CD14-positive monocyte (primary cell): ENCODE measurements at regions of chr3 and their contacts with region 1.

Region 1: DNA sequence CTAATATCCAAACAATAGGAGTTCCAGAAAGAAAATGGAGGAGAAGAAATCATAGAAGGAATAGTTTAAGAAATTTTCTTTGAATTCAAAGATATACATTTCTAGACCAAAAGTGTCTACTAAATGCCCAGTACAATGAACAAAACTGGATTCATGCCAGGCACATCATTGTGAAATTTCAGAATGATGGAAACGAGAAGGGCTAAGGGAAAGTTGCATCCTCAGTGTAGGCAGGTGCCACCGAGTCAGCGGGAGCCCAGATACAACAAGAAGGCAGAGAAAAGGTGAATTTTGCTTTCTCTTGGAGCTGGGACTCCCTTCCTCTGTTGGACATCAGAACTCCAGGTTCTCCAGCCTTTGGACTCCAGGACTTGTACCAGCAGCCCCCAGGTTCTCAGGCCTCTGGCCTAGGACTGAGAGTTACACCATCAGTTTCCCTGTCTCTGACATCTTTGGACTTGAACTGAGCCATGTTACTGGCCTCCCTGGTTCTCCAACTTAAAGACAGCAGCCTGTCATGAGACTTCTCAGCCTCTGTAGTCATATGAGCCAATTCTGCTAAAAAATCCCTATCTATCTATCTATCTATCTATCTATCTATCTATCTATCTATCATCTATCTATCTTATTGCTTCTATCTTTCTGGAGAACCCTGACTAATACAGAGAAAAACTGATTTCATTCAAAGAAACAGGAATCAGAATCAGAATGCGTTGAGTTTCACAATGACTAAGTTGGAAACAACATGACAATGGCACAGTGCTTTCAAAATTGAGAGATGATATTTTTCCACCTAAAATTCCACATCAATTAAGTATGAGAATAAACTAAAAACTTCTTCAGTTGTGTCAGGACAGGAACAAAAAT is 207.7 kb downstream of the FAM43A start:
- DNase-seq: peak in 1 of 3 donors; percentile 14
- H3K4me3 ChIP-seq: no peak overlapping the region
- H3K4me3 Mint-ChIP-seq: no peak overlapping the region
- H3K27ac ChIP-seq: no peak overlapping the region
- H3K27ac Mint-ChIP-seq: no peak overlapping the region
- H3K4me1 ChIP-seq: peaks cover 0 to 4% of the 10 kb centered on the region in 2 donors
- H3K4me1 Mint-ChIP-seq: peaks cover 25% of the 10 kb centered on the region
- H3K27me3 ChIP-seq: no peaks in the 10 kb centered on the region
- H3K27me3 Mint-ChIP-seq: peaks cover 0 to 3% (median 0%) of the 10 kb centered on the region in 3 donors
- CTCF ChIP-seq: no peak

Region 2: DNA sequence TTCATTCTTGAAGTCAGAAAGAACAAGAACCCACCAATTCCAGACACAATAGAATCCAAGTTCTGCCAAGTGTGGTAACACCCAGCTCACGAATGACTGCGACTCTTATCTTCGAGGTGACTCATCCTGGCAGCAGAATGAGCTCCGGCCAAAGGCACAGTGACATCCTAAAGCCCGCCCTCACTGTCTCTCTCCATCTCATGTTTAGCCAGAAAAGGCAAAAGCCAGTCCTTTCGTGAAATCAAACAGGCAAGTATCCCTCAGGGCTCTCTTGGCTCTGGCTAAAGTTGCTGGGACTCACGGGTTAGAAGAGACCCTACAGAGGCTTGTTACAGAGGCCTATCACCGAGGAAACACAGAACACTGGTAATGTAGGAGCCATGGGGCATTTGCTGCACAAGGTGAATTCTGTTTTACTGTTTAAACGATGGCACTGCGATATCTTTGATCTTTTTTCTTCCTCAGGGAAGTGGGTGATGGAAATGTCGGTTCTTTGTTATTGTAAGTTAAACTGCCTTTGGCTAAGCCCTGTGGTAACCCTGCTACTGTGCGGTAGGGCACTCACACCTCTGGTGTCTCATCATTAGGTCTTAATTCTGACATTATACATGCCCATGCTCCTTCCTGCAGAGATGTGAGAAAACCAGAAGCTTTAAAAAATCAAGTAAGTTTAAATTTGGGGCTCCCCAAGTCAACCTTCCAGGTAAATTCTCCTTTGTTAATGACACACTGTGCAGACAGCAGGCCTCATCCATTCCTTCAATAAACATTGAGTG is 52.1 kb before region 1 on chr3:
- intact Hi-C with region 1: loop called in 1 of 2 experiments (anchors 10 kb)
- DNase-seq: no peak
- H3K4me3 ChIP-seq: no peak overlapping the region
- H3K4me3 Mint-ChIP-seq: no peak overlapping the region
- H3K27ac ChIP-seq: no peak overlapping the region
- H3K27ac Mint-ChIP-seq: no peak overlapping the region
- H3K4me1 ChIP-seq: peaks cover 9 to 16% of the 10 kb centered on the region in 2 donors
- H3K4me1 Mint-ChIP-seq: peaks cover 14% of the 10 kb centered on the region
- H3K27me3 ChIP-seq: no peaks in the 10 kb centered on the region
- H3K27me3 Mint-ChIP-seq: peaks cover 0 to 6% (median 1%) of the 10 kb centered on the region in 3 donors
- CTCF ChIP-seq: no peak